BJ (cell line): ENCODE measurements at regions of chr4 and their contacts with region 1.

Region 1: DNA sequence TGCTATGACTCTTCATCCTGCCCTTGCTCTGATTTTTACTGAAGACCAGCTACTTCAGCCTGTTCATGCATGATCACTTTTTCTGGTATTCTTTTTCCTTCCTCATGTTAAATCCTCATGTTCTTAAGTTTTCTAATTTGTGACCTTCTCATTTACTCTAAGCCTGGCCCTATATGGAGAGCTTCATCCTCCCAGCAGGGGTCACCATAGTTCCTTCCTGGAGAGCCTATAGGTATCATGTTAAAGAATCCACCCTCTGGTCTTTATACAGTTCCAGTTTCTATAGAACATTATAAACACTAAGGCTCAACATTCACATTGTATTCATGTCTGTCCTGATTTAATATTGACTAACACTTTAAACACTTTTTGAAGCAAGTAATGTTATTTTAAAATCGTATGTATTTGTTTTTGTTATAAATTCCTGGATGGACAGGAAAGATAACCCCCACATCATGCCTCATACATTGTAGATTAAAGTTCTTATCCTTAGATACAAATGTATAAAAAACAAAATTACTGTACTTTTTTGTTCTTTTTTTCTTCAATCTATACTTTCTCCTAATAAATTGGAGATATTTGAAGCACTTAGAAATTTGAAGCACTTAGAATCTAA is 53.8 kb upstream of the OTUD4 start:
- DNase-seq: no peak
- H3K4me3 ChIP-seq: no peak overlapping the region
- H3K27me3 ChIP-seq: no peaks in the 10 kb centered on the region
- CTCF ChIP-seq: peak; percentile 87

Region 2: GRCh38 chr4:144989306-144989705 is 244.9 kb before region 1 on chr4:
- CTCF ChIA-PET with region 1: no interaction called
- POLR2A ChIA-PET with region 1: no interaction called
- DNase-seq: no peak
- H3K4me3 ChIP-seq: no peak overlapping the region
- H3K27me3 ChIP-seq: no peaks in the 10 kb centered on the region
- CTCF ChIP-seq: no peak

Region 3: DNA sequence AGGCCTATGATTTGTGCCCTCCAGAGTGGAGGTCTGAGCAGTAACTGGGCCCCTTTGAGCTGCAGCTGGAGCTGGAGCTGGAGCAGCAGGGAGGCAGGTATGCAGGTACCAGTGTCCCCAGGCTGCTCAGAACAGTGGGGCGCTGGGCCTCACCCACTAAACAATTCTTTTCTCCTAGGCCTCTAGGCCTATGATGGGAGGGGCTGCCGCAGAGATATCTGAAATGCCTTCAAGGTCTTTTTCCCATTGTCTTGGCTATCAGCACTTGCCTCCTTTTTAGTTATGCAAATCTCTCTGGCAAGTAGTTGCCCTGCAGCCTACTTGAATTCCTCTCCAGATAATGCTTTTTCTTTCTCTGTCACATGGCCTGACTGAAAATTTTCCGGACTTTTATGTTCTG is 25.9 kb after region 1 on chr4:
- CTCF ChIA-PET with region 1: no interaction called
- POLR2A ChIA-PET with region 1: no interaction called
- DNase-seq: no peak
- H3K4me3 ChIP-seq: no peak overlapping the region
- H3K27me3 ChIP-seq: no peaks in the 10 kb centered on the region; the same call in 1 of the 2 replicates
- CTCF ChIP-seq: no peak

Region 4: DNA sequence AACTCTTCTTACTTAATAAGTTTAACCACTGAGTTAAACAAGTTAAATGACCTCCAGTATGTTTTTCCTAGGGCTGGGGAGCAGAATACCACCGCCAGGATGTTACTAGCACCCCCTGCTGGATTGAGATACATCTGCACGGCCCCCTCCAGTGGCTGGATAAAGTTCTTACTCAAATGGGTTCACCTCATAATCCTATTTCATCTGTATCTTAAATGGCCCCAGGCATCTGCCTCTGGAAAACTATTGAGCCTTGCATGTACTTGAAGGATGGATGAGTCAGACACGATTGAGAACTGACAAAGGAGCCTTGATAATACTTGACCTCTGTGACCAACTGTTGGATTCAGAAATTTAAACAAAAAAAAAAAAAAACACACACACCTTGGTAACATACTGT is 323.5 kb after region 1 on chr4:
- CTCF ChIA-PET with region 1: interaction called, 21 read pairs
- POLR2A ChIA-PET with region 1: no interaction called
- DNase-seq: no peak
- H3K4me3 ChIP-seq: no peak overlapping the region
- H3K27me3 ChIP-seq: no peaks in the 10 kb centered on the region
- CTCF ChIP-seq: peak; percentile 95

Region 5: GRCh38 chr4:145618932-145619638 is 384.9 kb after region 1 on chr4 and contains the start of gene MMAA:
- CTCF ChIA-PET with region 1: interaction called, 10 read pairs
- POLR2A ChIA-PET with region 1: no interaction called
- DNase-seq: peak; percentile 56
- H3K4me3 ChIP-seq: peak within 1 kb of the TSS; percentile 75
- H3K27me3 ChIP-seq: no peaks in the 10 kb centered on the region
- CTCF ChIP-seq: peak; percentile 56
- polyA plus RNA-seq, gene MMAA: 3.4 and 7.9 TPM in 2 replicates